GM12878 (cell line): ENCODE measurements at regions of chr16 and their contacts with region 1.

Region 1: GRCh38 chr16:10256784-10257641 is 74.8 kb upstream of the GRIN2A start:
- DNase-seq: peak; percentile 49
- ATAC-seq: peak; percentile 89
- H3K4me3 ChIP-seq: no peak overlapping the region
- H3K27ac ChIP-seq: 0 out of 2 replicates have a peak overlapping the region, but pooled peaks have one; percentile 42
- H3K4me1 ChIP-seq: peaks cover 19% of the 10 kb centered on the region
- H3K27me3 ChIP-seq: no peaks in the 10 kb centered on the region
- CTCF ChIP-seq: peak; percentile 89 to 96 (median 92)
- EP300 ChIP-seq: peak; percentile 17 to 40; a peak in 1 of 4 replicates
- POLR2A ChIP-seq: no peak
- RAD21 ChIP-seq: peak; percentile 90

Region 2: GRCh38 chr16:9258423-9259051 is 998.5 kb before region 1 on chr16:
- CTCF ChIA-PET with region 1: no interaction called
- POLR2A ChIA-PET with region 1: no interaction called
- RAD21 ChIA-PET with region 1: interaction called, 3 read pairs
- SMC1A ChIA-PET with region 1: no interaction called
- in situ Hi-C with region 1: no loop called
- intact Hi-C with region 1: loop called (anchors 5 kb)
- DNase-seq: no peak
- ATAC-seq: peak; percentile 95
- H3K4me3 ChIP-seq: no peak overlapping the region
- H3K27ac ChIP-seq: no peak overlapping the region
- H3K4me1 ChIP-seq: no peaks in the 10 kb centered on the region
- H3K27me3 ChIP-seq: no peaks in the 10 kb centered on the region; a peak in 1 of 4 replicates
- CTCF ChIP-seq: peak; percentile 69 to 76 (median 71)
- EP300 ChIP-seq: no peak
- POLR2A ChIP-seq: no peak
- RAD21 ChIP-seq: peak; percentile 57

Region 3: DNA sequence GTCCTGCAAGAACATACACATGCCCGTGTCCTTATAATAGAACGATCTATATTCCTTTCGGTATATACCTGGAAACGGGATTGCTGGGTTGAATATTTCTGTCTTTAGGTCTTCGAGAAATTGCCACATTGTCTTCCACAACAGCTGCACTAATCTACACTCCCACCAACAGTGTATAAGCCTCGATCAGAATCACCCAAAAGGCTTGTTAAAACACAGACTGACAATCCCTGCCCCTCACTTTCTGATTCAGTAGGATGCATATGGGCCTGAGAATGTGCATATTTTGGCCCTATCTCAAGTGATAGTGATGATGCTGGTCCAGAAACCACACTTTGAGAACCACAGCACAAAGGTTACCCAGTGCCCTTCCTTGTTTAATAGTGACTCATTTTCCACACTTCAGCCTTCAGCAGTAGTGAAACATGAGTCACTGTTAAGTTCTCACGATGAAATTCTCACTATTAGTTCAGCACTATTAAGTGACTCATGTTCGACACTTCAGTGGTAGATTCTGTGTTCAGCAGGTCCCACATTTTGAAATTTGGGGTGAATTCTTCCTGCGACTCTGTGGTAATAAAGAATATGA is 290.4 kb before region 1 on chr16:
- CTCF ChIA-PET with region 1: no interaction called
- POLR2A ChIA-PET with region 1: no interaction called
- RAD21 ChIA-PET with region 1: no interaction called
- SMC1A ChIA-PET with region 1: no interaction called
- in situ Hi-C with region 1: no loop called
- intact Hi-C with region 1: no loop called
- DNase-seq: peak; percentile 86
- ATAC-seq: peak; percentile 92
- H3K4me3 ChIP-seq: no peak overlapping the region
- H3K27ac ChIP-seq: no peak overlapping the region
- H3K4me1 ChIP-seq: peaks cover 3% of the 10 kb centered on the region
- H3K27me3 ChIP-seq: no peaks in the 10 kb centered on the region
- CTCF ChIP-seq: no peak
- EP300 ChIP-seq: peak; percentile 73 to 81; a peak in 2 of 4 replicates
- POLR2A ChIP-seq: no peak
- RAD21 ChIP-seq: no peak

Region 4: DNA sequence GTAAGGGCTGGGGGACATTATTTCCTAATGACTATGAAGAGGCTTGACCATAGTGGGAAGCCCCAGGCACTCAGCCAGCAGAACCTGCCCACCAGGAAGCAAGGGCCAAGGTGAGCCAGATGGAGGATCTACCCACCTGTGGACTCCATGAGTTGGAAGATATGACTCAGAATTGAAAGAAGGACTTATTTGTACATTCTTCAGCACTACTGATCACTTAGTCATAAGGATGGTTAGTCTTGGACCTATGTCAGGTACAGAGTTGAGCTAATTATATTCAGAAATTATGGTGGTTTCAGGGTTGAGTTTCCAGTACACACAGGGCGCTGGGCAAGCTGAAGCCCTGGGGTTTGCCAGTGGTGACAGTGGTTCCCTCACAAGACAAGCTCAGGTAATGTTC is 50.8 kb before region 1 on chr16:
- CTCF ChIA-PET with region 1: no interaction called
- POLR2A ChIA-PET with region 1: no interaction called
- RAD21 ChIA-PET with region 1: no interaction called
- SMC1A ChIA-PET with region 1: no interaction called
- in situ Hi-C with region 1: no loop called
- intact Hi-C with region 1: no loop called
- DNase-seq: peak; percentile 27
- ATAC-seq: peak; percentile 94
- H3K4me3 ChIP-seq: no peak overlapping the region
- H3K27ac ChIP-seq: no peak overlapping the region
- H3K4me1 ChIP-seq: peaks cover 8% of the 10 kb centered on the region
- H3K27me3 ChIP-seq: no peaks in the 10 kb centered on the region
- CTCF ChIP-seq: no peak
- EP300 ChIP-seq: no peak; a peak in 1 of 4 replicates
- POLR2A ChIP-seq: no peak
- RAD21 ChIP-seq: no peak

Region 5: DNA sequence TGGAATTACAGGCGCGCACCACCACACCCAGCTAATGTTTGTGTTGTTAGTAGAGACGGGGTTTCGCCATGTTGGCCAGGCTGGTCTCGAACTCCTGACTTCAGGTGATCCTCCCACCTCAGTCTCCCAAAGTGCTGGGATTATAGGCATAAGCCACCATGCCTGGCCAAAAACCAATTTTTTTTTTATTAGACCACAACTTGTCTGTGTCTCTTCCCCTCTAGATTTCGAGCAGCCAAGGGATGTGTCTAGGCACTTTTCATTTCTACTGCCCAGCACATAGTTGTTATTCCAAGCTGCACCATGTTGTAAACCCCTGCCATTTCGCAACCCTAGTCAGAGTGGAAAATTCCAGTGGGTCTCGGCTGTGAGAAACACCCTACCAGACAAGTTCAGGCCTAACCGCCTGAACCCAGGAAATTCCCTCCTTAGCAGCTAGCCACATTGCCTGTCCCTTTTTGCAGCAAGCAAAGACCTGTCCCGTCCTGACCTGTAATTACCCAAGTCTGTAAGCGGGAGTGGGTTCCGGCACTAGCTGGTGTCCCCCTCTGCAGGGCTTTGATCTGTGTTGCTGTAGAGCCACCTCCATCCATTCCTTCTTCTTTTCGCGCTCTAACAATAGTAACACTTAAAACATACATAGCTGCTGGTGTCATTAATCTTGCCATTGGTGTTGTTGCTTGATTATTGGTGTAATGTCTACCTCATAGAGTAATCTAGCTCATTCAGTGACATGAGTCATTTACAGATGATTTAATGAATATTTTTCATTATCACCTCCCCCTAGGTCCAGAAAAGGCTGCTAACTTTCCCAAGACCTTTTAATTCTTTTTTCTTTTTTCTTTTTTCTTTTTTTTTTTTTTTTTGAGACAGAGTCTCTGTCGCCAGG is 51.5 kb after region 1 on chr16:
- CTCF ChIA-PET with region 1: interaction called, 196 read pairs
- POLR2A ChIA-PET with region 1: interaction called, 15 read pairs
- RAD21 ChIA-PET with region 1: interaction called, 71 read pairs
- SMC1A ChIA-PET with region 1: interaction called, 139 read pairs
- in situ Hi-C with region 1: no loop called
- intact Hi-C with region 1: loop called (anchors 1 kb)
- DNase-seq: peak; percentile 16
- ATAC-seq: peak; percentile 24
- H3K4me3 ChIP-seq: no peak overlapping the region
- H3K27ac ChIP-seq: peak overlapping the region; percentile 50
- H3K4me1 ChIP-seq: peaks cover 31% of the 10 kb centered on the region
- H3K27me3 ChIP-seq: no peaks in the 10 kb centered on the region
- CTCF ChIP-seq: peak in 1 of 3 experiments; percentile 5; a peak in 1 of 6 replicates
- EP300 ChIP-seq: no peak
- POLR2A ChIP-seq: no peak
- RAD21 ChIP-seq: no peak

Region 6: GRCh38 chr16:10325783-10326543 is 69.0 kb after region 1 on chr16:
- CTCF ChIA-PET with region 1: interaction called, 15 read pairs
- POLR2A ChIA-PET with region 1: no interaction called
- RAD21 ChIA-PET with region 1: interaction called, 11 read pairs
- SMC1A ChIA-PET with region 1: interaction called, 6 read pairs
- in situ Hi-C with region 1: no loop called
- intact Hi-C with region 1: no loop called
- DNase-seq: no peak
- ATAC-seq: no peak
- H3K4me3 ChIP-seq: no peak overlapping the region
- H3K27ac ChIP-seq: no peak overlapping the region
- H3K4me1 ChIP-seq: 0 out of 2 replicates have a peak, but pooled peaks cover 3% of the 10 kb centered on the region
- H3K27me3 ChIP-seq: no peaks in the 10 kb centered on the region
- CTCF ChIP-seq: no peak
- EP300 ChIP-seq: no peak
- POLR2A ChIP-seq: no peak
- RAD21 ChIP-seq: no peak

Region 7: DNA sequence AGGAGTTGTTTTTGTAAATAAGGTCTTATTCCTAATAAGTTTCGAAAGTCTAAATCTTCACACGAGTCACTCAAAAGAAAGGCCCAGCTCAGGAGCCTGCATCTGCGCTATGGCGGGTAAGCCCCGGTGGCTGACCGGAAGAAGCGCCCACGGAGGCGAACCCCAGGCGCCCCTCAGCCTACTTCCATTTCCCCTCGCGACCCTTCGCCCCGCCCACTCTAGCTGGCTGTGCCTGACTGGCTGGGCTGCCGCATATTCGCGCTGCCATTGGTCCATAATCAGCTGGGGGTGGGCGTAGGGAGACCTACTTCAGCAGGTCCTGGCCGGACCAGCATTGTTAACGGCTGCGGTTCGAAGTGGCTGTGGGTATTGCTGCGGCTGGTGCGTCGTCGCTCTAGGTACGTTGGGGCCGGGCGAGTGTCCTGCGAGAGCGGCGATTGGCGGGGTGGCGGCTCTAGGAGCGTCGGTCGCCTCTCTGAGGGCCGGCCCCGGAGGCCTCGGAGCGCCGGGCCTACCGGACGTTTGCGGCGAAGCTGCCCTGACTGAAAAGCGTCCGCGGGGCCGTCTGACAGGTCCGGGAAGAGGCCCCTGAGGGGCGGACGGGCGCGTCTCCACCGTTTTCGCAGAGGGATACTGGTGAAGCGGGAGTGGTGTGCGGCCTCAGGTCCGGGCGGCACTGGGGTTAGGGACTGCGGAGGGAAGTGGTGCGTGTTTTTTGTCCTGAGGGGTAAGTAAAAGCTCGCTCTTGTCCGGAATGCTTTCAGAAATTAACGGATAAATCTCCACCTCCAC is 128.9 kb after region 1 on chr16 and contains the start of gene ATF7IP2:
- CTCF ChIA-PET with region 1: interaction called, 3 read pairs
- POLR2A ChIA-PET with region 1: no interaction called
- RAD21 ChIA-PET with region 1: interaction called, 5 read pairs
- SMC1A ChIA-PET with region 1: interaction called, 6 read pairs
- in situ Hi-C with region 1: loop called (anchors 10 kb)
- intact Hi-C with region 1: loop called (anchors 1 kb)
- DNase-seq: peak; percentile 80
- ATAC-seq: peak; percentile 97
- H3K4me3 ChIP-seq: peak within 1 kb of the TSS; percentile 80
- H3K27ac ChIP-seq: peak within 1 kb of the TSS; percentile 80
- H3K4me1 ChIP-seq: peaks cover 7% of the 10 kb centered on the region
- H3K27me3 ChIP-seq: no peaks in the 10 kb centered on the region
- CTCF ChIP-seq: no peak
- EP300 ChIP-seq: peak in 1 of 2 experiments; percentile 25; a peak in 1 of 4 replicates
- POLR2A ChIP-seq: peak; percentile 100
- RAD21 ChIP-seq: no peak
- polyA plus RNA-seq, gene ATF7IP2: 67.9 to 75.2 TPM

Region 8: GRCh38 chr16:10509534-10510025 is 252.6 kb after region 1 on chr16:
- CTCF ChIA-PET with region 1: interaction called, 136 read pairs
- POLR2A ChIA-PET with region 1: no interaction called
- RAD21 ChIA-PET with region 1: interaction called, 48 read pairs
- SMC1A ChIA-PET with region 1: interaction called, 193 read pairs
- in situ Hi-C with region 1: loop called (anchors 5 kb)
- intact Hi-C with region 1: loop called (anchors 1 kb)
- DNase-seq: peak; percentile 70
- ATAC-seq: peak; percentile 99
- H3K4me3 ChIP-seq: no peak overlapping the region
- H3K27ac ChIP-seq: no peak overlapping the region
- H3K4me1 ChIP-seq: peaks cover 3% of the 10 kb centered on the region; the same call in 1 of the 2 replicates
- H3K27me3 ChIP-seq: no peaks in the 10 kb centered on the region
- CTCF ChIP-seq: peak; percentile 77 to 92 (median 86)
- EP300 ChIP-seq: no peak
- POLR2A ChIP-seq: no peak
- RAD21 ChIP-seq: peak; percentile 97